ENCODE measurements at regions of chr4 and their contacts with region 1.

Region 1: GRCh38 chr4:174522183-174523048 is at the start of gene HPGD:
- DNase-seq: peak in 2 of 3 donors; percentile 33 to 34
- H3K4me3 ChIP-seq: peak within 1 kb of the TSS; percentile 44 to 79 (median 50)
- H3K4me3 Mint-ChIP-seq: peak within 1 kb of the TSS; percentile 85 to 97
- H3K27ac ChIP-seq: no peak within 1 kb of the TSS
- H3K27ac Mint-ChIP-seq: peak within 1 kb of the TSS in 6 of 7 donors; percentile 46 to 87 (median 76)
- H3K4me1 ChIP-seq: peaks cover 34 to 37% of the 10 kb centered on the region in 2 donors
- H3K4me1 Mint-ChIP-seq: peaks cover 42% of the 10 kb centered on the region
- H3K27me3 ChIP-seq: peaks cover 36 to 46% of the 10 kb centered on the region in 2 donors
- H3K27me3 Mint-ChIP-seq: peaks cover 37 to 49% (median 38%) of the 10 kb centered on the region in 3 donors
- CTCF ChIP-seq: no peak
- polyA plus RNA-seq, gene HPGD: 0.17 to 2.3 (median 1.3) TPM

Region 2: DNA sequence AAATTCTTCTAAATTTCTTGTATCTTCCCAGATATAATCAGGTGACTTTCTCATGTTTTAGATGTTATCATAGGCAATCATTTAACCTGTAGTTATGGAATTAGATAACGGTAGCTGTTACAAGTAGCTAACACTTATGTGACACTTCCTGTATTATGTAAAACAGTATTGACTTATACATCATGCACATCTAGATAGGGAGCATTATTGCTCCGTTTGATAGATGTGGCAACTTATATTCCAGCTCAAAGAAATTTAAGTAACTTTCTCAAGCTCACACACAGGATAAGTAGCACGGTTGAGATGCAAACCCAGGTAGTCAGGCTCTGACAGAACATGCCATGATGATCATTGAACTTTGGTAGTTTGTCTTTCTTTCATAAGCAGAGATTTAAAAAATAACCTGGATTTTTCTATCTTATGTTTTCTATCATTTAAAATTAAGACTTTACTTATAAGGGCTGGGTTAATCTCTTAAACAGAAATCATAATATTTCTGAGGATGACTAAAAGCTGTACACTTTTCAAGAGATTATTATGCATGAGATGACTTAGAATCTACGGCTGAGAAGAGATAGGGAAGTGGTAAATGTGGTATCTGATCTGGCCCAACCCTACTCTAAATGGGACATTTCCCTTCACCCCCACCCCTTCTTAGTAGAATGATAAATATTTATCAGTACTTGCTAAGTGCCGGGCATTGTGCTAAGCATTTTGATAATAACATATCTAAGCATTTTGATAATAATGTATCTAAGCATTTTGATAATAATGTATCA is 69.0 kb after region 1 on chr4:
- intact Hi-C with region 1: loop called in 1 of 2 experiments (anchors 5 kb)
- DNase-seq: peak; percentile 63 to 73 (median 72)
- H3K4me3 ChIP-seq: peak overlapping the region in 1 of 3 experiments; percentile 56
- H3K4me3 Mint-ChIP-seq: peak overlapping the region in 1 of 2 donors; percentile 70
- H3K27ac ChIP-seq: peak overlapping the region in 1 of 2 donors; percentile 84
- H3K27ac Mint-ChIP-seq: peak overlapping the region; percentile 50 to 90 (median 88)
- H3K4me1 ChIP-seq: peaks cover 30 to 36% of the 10 kb centered on the region in 2 donors
- H3K4me1 Mint-ChIP-seq: peaks cover 34% of the 10 kb centered on the region
- H3K27me3 ChIP-seq: no peaks in the 10 kb centered on the region
- H3K27me3 Mint-ChIP-seq: no peaks in the 10 kb centered on the region
- CTCF ChIP-seq: no peak

Region 3: DNA sequence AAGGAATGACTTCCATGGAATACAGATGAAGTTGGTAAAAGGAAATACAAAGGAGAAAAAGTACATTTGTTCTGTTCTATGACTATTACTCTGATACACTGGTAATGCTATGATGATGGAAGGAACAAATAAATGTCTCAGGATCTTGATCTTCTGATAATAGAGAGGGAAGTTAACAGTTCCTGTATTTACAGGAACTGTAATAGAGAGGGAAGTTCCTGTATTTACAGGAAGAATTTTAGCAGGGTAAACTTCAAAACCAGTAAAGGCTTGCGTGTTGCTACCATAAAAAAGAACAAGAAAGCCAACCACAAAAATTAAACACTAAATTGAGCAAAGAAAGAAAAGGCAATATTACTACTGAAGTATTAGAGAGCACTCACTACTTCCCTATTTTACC is 91.6 kb after region 1 on chr4:
- intact Hi-C with region 1: loop called in 1 of 2 experiments (anchors 10 kb)
- DNase-seq: peak; percentile 54 to 74 (median 59)
- H3K4me3 ChIP-seq: peak overlapping the region in 1 of 3 experiments; percentile 18
- H3K4me3 Mint-ChIP-seq: peak overlapping the region in 1 of 2 donors; percentile 60
- H3K27ac ChIP-seq: peak overlapping the region; percentile 55 to 71
- H3K27ac Mint-ChIP-seq: peak overlapping the region; percentile 38 to 92 (median 86)
- H3K4me1 ChIP-seq: peaks cover 33 to 44% of the 10 kb centered on the region in 2 donors
- H3K4me1 Mint-ChIP-seq: peaks cover 37% of the 10 kb centered on the region
- H3K27me3 ChIP-seq: no peaks in the 10 kb centered on the region
- H3K27me3 Mint-ChIP-seq: peaks cover 0 to 4% (median 2%) of the 10 kb centered on the region in 3 donors
- CTCF ChIP-seq: no peak

Region 4: GRCh38 chr4:174631901-174632758 is 109.7 kb after region 1 on chr4:
- intact Hi-C with region 1: no loop called
- DNase-seq: peak; percentile 25 to 56 (median 46)
- H3K4me3 ChIP-seq: no peak overlapping the region
- H3K4me3 Mint-ChIP-seq: no peak overlapping the region
- H3K27ac ChIP-seq: no peak overlapping the region
- H3K27ac Mint-ChIP-seq: no peak overlapping the region
- H3K4me1 ChIP-seq: no peaks in the 10 kb centered on the region
- H3K4me1 Mint-ChIP-seq: peaks cover 1% of the 10 kb centered on the region
- H3K27me3 ChIP-seq: no peaks in the 10 kb centered on the region
- H3K27me3 Mint-ChIP-seq: no peaks in the 10 kb centered on the region
- CTCF ChIP-seq: peak; percentile 86